Esophagus muscularis mucosa (tissue), 4 donors: ENCODE measurements at regions of chr11 and their contacts with region 1.

Region 1: GRCh38 chr11:125404776-125405435 is 91.2 kb downstream of the FEZ1 start:
- DNase-seq: no peak
- H3K4me3 ChIP-seq: peak overlapping the region in 3 of 4 donors; percentile 4 to 25 (median 25)
- H3K27ac ChIP-seq: no peak overlapping the region
- H3K4me1 ChIP-seq: peaks cover 0 to 16% (median 8%) of the 10 kb centered on the region in 4 donors
- H3K27me3 ChIP-seq: peaks cover 0 to 13% (median 2%) of the 10 kb centered on the region in 4 donors
- CTCF ChIP-seq: peak in 2 of 3 experiments; percentile 94 to 95
- EP300 ChIP-seq: no peak
- POLR2A ChIP-seq: no peak

Region 2: DNA sequence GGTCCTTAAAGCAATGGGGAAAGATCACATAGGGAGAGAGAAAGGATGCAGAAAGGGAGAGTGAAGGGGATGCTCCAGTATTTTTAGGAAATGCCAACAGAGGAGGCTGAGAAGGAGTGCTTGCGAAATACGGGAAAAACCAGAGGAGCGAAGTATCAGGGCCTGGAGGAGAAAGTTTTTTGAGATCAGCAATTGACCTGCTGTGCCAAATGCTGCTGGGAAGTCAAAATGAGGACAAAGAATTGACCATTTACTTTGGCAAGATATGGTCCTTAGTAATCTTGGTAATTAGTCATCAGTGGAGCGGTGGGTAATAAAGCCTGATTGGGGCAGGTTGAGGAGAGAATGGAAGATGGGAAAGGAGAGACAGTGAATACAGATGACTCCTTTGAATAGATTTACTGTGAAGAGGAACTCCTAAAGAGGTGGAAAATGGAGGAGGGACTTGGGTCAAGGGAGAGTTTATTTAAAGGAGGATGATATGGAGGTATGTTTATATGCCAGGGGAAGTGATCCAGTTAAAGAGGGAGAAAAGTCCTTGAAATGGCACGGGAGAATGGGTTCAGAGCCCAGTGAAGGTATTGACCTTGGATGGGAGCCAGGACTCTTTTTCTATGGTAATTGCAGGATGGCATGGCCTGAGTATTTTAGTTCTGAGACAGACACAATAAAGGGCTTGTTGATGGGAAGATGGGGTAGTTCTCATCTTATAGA is 128.8 kb before region 1 on chr11:
- intact Hi-C with region 1: no loop called
- DNase-seq: no peak
- H3K4me3 ChIP-seq: no peak overlapping the region
- H3K27ac ChIP-seq: no peak overlapping the region
- H3K4me1 ChIP-seq: no peaks in the 10 kb centered on the region
- H3K27me3 ChIP-seq: no peaks in the 10 kb centered on the region
- CTCF ChIP-seq: no peak
- EP300 ChIP-seq: no peak
- POLR2A ChIP-seq: no peak

Region 3: DNA sequence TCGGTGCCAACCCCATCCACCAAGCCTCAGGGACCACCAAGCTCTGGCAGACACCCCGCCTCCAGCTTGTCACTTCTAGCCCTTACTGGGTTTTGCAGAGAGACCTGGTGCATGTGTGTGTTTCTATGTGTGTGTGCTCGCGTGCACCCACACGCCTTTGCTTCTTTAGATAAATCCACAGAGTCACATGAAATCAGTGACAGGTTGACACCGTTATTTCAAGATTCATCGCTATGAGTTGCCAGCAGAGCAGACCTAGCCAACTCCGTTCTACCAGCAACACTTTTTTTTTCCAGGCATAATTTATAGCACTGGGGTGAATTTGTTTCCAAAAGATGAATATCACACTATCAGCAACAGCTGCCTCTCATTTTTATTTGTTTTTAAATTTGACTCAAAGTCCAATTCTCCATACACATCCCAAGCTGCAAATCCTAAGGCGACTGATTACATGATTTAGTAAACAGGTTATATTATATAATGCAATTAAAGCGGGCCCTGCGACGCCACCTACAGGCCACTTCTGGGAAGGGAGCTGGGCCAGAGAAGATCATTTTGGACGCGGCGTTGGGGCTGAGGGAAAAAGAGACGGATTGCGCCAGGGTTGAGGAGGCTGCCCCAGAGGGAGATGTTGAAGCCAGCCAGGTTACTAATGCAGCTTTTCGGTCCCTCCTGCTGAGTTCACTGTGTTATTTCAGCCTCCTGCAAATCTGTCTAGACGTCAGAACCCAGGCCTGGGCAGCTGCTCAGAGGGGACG is 59.3 kb before region 1 on chr11:
- intact Hi-C with region 1: loop called (anchors 2 kb)
- DNase-seq: peak; percentile 94
- H3K4me3 ChIP-seq: no peak overlapping the region
- H3K27ac ChIP-seq: peak overlapping the region; percentile 33 to 70 (median 56)
- H3K4me1 ChIP-seq: peaks cover 11 to 38% (median 34%) of the 10 kb centered on the region in 4 donors
- H3K27me3 ChIP-seq: no peaks in the 10 kb centered on the region
- CTCF ChIP-seq: peak; percentile 86 to 95 (median 93)
- EP300 ChIP-seq: no peak
- POLR2A ChIP-seq: no peak

Region 4: GRCh38 chr11:125605417-125605816 is 200.5 kb after region 1 on chr11:
- intact Hi-C with region 1: no loop called
- DNase-seq: no peak
- H3K4me3 ChIP-seq: no peak overlapping the region
- H3K27ac ChIP-seq: no peak overlapping the region
- H3K4me1 ChIP-seq: peaks cover 0 to 4% (median 0%) of the 10 kb centered on the region in 4 donors
- H3K27me3 ChIP-seq: no peaks in the 10 kb centered on the region
- CTCF ChIP-seq: no peak
- EP300 ChIP-seq: no peak
- POLR2A ChIP-seq: no peak